Ovary (tissue), 10 donors: ENCODE measurements at regions of chr1 and their contacts with region 1.

Region 1: DNA sequence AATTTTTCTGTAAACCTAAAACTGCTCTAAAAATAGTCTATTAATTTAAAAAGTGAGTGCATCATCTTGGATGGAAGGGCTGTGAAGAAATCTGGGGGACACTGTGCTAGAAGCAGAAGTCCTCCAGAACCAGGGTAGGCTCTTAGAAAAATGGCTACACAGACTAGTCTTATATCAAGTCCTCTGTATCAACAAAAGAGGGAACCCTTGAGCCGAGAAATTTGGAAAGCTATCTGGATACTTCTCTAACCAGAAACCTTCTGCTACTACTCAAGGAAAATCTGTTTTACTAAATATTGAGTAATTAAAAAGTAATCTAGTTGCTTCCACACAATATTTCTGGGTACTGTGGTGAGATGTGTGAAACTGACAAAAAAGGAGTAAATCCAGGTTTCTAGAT is 92.1 kb downstream of the WDR3 start:
- DNase-seq: no peak
- H3K4me3 ChIP-seq: no peak overlapping the region
- H3K27ac ChIP-seq: no peak overlapping the region
- H3K4me1 ChIP-seq: no peaks in the 10 kb centered on the region
- H3K27me3 ChIP-seq: no peaks in the 10 kb centered on the region
- CTCF ChIP-seq: no peak
- EP300 ChIP-seq: no peak
- POLR2A ChIP-seq: no peak

Region 2: GRCh38 chr1:118033851-118034250 is 12.2 kb after region 1 on chr1:
- intact Hi-C with region 1: loop called in 1 of 4 experiments (anchors 2 kb)
- DNase-seq: no peak
- H3K4me3 ChIP-seq: no peak overlapping the region
- H3K27ac ChIP-seq: no peak overlapping the region
- H3K4me1 ChIP-seq: no peaks in the 10 kb centered on the region
- H3K27me3 ChIP-seq: no peaks in the 10 kb centered on the region
- CTCF ChIP-seq: no peak
- EP300 ChIP-seq: no peak
- POLR2A ChIP-seq: no peak

Region 3: GRCh38 chr1:118185084-118185832 is 163.6 kb after region 1 on chr1 and contains the start of gene SPAG17:
- intact Hi-C with region 1: no loop called
- DNase-seq: peak; percentile 30 to 64 (median 52)
- H3K4me3 ChIP-seq: peak within 1 kb of the TSS; percentile 7
- H3K27ac ChIP-seq: no peak within 1 kb of the TSS
- H3K4me1 ChIP-seq: no peaks in the 10 kb centered on the region
- H3K27me3 ChIP-seq: no peaks in the 10 kb centered on the region
- CTCF ChIP-seq: no peak
- EP300 ChIP-seq: no peak
- POLR2A ChIP-seq: no peak
- total RNA-seq, gene SPAG17: 0.08 to 39.5 (median 1.7) TPM